ENCODE measurements at regions of chr3 and their contacts with region 1.

Region 1: DNA sequence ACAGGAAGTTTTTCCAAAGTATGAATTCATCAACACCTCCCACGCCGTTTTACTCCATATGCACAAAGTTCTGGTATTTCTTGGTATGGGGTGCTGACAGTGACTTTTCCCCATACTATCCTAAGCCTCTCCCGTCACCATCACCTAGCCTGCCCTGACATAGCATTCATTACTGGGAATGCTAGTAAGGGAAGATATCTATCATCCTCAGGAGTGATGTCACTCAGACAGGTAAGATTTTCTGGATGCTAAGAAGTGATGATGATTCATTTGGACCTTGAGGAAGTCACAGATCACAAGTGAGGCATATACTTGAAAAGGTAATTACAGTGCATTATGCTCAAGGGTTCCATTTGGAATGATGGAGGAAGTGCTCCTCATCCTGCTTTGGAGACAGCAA is 355.1 kb upstream of the STAC start:
- DNase-seq: no peak
- ATAC-seq: no peak
- H3K4me3 ChIP-seq: no peak overlapping the region
- H3K27ac ChIP-seq: no peak overlapping the region
- H3K4me1 ChIP-seq: no peaks in the 10 kb centered on the region
- H3K27me3 ChIP-seq: no peaks in the 10 kb centered on the region
- CTCF ChIP-seq: no peak

Region 2: GRCh38 chr3:36060950-36061349 is 35.7 kb after region 1 on chr3:
- intact Hi-C with region 1: loop called in 1 of 2 experiments (anchors 2 kb)
- DNase-seq: no peak
- ATAC-seq: no peak
- H3K4me3 ChIP-seq: no peak overlapping the region
- H3K27ac ChIP-seq: no peak overlapping the region
- H3K4me1 ChIP-seq: no peaks in the 10 kb centered on the region
- H3K27me3 ChIP-seq: no peaks in the 10 kb centered on the region
- CTCF ChIP-seq: no peak